ENCODE measurements at regions of chr3 and their contacts with region 1.

Region 1: DNA sequence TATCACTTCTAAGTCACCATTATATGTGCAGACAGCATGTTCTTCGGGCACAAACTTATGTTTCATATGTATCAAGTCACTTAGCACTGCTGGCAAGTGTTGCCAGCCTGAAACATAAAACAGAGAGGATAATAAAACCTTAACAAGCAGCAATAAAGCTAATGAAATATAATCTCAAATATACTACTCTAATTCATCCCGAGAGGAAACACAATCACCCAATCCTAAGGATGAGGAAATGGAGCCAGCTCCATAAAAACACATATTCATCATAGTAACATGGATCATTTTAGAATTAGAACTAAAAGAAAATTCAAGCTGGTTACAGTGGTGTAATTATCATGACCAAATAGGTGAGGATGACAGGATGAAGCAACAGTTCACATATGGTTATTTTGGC is 1072.7 kb downstream of the EPHA3 start:
- DNase-seq: no peak
- H3K4me3 ChIP-seq: no peak overlapping the region
- H3K27ac ChIP-seq: no peak overlapping the region
- H3K4me1 ChIP-seq: peaks cover 0 to 3% (median 0%) of the 10 kb centered on the region in 4 donors
- H3K27me3 ChIP-seq: no peaks in the 10 kb centered on the region
- CTCF ChIP-seq: no peak
- EP300 ChIP-seq: no peak
- POLR2A ChIP-seq: no peak

Region 2: DNA sequence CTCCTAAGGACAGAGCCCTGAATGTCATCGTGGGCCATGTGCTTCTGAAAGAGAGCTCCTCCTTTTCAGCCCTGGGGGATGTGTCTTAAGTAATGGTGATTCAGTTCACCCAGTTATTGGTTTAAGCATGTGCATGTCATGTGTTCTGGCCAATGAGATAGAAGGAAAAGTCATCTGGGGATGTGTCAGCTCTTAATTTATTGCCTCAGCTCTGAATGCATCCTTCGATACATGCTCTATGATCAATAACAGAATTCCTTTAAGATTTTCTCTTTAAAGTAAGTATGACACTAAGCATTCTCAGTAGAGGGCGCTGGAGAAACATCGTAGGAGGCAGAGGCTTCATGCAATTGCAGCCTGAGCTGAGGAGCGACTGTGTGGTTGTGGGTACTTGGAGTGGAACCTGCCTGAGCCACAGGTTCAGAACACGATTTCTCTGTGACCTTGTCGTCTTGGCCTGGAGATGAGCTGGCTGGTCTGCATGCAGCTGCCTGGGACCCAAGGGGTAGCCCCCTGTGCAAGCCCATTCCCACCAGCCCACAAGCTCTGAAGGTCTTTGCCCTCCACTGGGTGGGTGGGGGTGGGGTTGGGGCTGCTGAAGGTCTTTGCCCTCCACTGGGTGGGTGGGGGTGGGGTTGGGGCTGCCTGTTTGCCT is 1960.8 kb before region 1 on chr3:
- intact Hi-C with region 1: loop called (anchors 10 kb)
- DNase-seq: peak; percentile 31 to 86
- H3K4me3 ChIP-seq: no peak overlapping the region
- H3K27ac ChIP-seq: no peak overlapping the region
- H3K4me1 ChIP-seq: no peaks in the 10 kb centered on the region
- H3K27me3 ChIP-seq: no peaks in the 10 kb centered on the region
- CTCF ChIP-seq: peak in 4 of 7 experiments; percentile 14 to 23 (median 20)
- EP300 ChIP-seq: no peak
- POLR2A ChIP-seq: no peak

Region 3: DNA sequence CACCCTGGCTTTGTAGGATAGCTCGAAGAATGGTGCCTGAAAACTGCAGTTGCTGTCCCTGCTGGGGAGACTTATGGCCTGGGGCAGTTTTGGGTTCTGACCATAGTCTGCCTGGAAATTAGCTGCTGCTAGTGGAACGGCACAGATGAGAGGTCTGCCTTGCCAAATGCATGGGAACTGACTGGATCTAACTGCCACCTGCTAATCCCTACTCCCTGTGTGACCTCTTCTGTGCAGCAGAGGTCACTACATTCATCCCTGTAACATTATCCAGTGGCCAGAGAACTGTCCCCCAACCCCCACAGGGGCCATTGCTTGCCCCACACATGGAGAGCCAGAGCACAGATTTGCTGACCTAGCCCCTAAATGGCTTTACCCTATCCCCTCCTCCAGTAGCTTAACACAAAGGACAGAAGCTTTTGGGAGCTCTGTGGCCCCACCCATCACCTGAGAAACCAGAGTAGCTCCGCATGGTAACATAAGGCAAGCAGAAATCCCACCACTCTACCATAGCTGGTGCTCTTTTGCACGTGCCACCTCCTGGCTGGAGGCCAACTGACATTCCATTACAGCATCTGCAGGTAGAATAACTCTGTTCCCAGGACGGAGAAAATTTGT is 232.7 kb before region 1 on chr3:
- intact Hi-C with region 1: no loop called
- DNase-seq: no peak
- H3K4me3 ChIP-seq: no peak overlapping the region
- H3K27ac ChIP-seq: no peak overlapping the region
- H3K4me1 ChIP-seq: no peaks in the 10 kb centered on the region
- H3K27me3 ChIP-seq: no peaks in the 10 kb centered on the region
- CTCF ChIP-seq: no peak
- EP300 ChIP-seq: no peak
- POLR2A ChIP-seq: no peak

Region 4: GRCh38 chr3:89957451-89957850 is 222.6 kb before region 1 on chr3:
- intact Hi-C with region 1: no loop called
- DNase-seq: peak in 1 of 2 donors; percentile 13
- H3K4me3 ChIP-seq: no peak overlapping the region
- H3K27ac ChIP-seq: no peak overlapping the region
- H3K4me1 ChIP-seq: no peaks in the 10 kb centered on the region
- H3K27me3 ChIP-seq: no peaks in the 10 kb centered on the region
- CTCF ChIP-seq: no peak
- EP300 ChIP-seq: no peak
- POLR2A ChIP-seq: no peak

Region 5: GRCh38 chr3:90253131-90253530 is 73.0 kb after region 1 on chr3:
- intact Hi-C with region 1: no loop called
- DNase-seq: no peak
- H3K4me3 ChIP-seq: no peak overlapping the region
- H3K27ac ChIP-seq: no peak overlapping the region
- H3K4me1 ChIP-seq: no peaks in the 10 kb centered on the region
- H3K27me3 ChIP-seq: no peaks in the 10 kb centered on the region
- CTCF ChIP-seq: no peak
- EP300 ChIP-seq: no peak
- POLR2A ChIP-seq: no peak

Measured in stomach (tissue), 19 donors.